ENCODE measurements at regions of chr11 and their contacts with region 1.

Region 1: GRCh38 chr11:122863704-122864326 is 18.7 kb upstream of the JHY start:
- DNase-seq: peak; percentile 43

Region 2: DNA sequence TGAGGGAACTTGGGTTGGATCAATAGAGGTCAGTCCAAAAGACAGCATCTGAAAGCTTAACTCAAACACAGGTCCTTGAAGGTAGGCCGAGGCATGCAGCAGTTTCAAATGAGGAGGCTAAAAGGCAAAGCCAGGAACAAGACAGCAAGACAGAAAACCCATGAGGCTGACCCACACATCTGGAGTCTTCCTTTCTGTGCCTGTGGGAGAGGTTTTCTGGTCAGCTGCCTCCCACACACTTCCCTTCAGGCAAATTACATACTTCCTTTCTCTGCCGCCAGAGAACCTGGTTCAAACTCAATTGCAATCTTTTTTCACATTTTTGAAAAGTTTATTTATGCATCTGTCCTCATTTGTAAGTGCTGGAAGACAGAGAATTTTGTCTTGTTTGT is 55.3 kb before region 1 on chr11:
- CTCF ChIA-PET with region 1: no interaction called
- POLR2A ChIA-PET with region 1: no interaction called
- DNase-seq: no peak

Region 3: DNA sequence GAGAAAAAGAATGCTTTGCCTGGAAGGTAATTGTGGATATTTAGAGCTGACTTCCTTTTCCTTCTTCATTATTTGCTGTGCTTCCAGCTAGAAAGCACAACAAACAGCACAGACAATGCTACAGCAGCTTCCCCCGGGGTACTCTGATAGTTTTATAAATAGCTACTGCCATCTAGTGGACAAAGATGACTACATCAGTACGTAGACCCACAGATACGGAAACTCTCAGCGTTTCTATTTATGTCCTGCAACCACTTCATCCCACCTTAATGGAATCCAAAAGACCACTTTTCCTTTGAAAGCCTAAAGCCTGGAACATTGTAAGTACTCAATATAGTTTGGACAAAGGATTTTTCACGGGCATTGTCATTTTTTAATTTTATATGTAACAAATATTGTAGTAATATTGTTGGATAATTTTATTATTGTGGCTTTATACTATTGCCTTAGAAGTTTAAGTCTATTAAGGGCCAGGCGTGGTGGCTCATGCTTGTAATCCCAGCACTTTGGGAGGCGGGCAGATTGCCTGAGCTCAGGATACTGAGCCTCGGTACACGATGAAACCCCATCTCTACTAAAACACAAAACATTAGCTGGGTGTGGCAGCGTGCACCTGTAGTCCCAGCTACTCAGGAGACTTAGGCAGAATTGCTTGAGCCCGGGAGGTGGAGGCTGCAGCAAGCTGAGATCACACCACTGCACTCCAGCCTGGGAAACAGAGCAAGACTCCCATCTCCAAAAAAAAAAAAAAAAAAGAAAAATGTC is 190.7 kb after region 1 on chr11:
- CTCF ChIA-PET with region 1: interaction called, 10 read pairs
- POLR2A ChIA-PET with region 1: interaction called, 4 read pairs
- DNase-seq: peak; percentile 71

Measured in HEK293T (cell line).